SK-N-SH (cell line): ENCODE measurements at regions of chr22 and their contacts with region 1.

Region 1: DNA sequence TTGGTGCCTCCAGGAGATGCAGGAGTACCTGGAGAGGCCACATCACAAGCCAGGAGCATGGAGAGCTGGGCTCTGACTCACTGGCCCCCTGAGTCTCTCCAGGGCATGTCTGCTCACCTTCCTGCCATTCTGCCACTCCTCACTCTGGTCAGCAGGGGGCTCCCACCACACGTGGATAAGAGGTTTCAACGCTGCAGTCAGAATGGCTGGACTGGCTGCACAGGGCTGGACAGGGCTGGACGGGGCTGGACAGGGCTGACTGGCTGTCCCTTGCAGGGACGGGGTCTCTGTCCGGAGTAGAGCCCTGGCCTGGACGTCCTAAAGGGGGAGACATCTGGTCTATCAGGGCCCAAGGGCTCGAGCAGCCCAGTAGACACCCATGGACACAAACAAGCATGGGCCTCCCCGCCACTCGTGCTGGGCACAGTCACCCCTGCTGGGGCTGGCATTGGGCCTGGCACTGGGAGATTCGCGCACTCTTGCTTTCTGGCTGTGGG is 34.6 kb downstream of the CYTH4 start:
- DNase-seq: peak; percentile 92
- H3K4me3 ChIP-seq: no peak overlapping the region; a peak in 1 of 4 replicates
- H3K27ac ChIP-seq: no peak overlapping the region
- H3K4me1 ChIP-seq: no peaks in the 10 kb centered on the region
- H3K27me3 ChIP-seq: no peaks in the 10 kb centered on the region
- CTCF ChIP-seq: peak; percentile 90
- EP300 ChIP-seq: no peak
- RAD21 ChIP-seq: peak; percentile 99

Region 2: DNA sequence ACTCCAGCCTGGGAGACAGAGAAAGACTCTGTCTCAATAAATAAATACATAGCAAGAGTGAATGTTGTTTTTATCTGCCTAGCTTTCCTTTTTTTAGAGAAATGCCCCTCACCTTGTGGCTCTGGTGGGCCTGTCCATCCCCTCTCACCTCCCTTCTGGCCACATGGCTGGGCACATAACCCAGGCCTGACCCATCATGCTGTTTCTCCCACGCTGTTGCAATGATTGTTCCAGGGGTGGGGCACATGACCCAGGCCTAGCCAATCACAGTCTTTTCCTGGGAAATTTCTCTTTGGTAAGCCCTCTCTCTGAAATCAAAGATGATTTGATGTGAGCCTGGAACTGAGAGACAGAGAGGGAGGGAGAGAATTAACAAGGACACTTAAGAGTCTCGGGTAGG is 40.1 kb before region 1 on chr22:
- CTCF ChIA-PET with region 1: no interaction called
- POLR2A ChIA-PET with region 1: no interaction called
- DNase-seq: no peak
- H3K4me3 ChIP-seq: no peak overlapping the region
- H3K27ac ChIP-seq: no peak overlapping the region
- H3K4me1 ChIP-seq: 0 out of 4 replicates have a peak, but pooled peaks cover 0 to 6% of the 10 kb centered on the region in 2 experiments
- H3K27me3 ChIP-seq: no peaks in the 10 kb centered on the region
- CTCF ChIP-seq: no peak
- EP300 ChIP-seq: no peak
- RAD21 ChIP-seq: no peak

Region 3: GRCh38 chr22:37330200-37331033 is 13.5 kb after region 1 on chr22:
- CTCF ChIA-PET with region 1: interaction called, 46 read pairs
- POLR2A ChIA-PET with region 1: no interaction called
- DNase-seq: peak; percentile 86
- H3K4me3 ChIP-seq: no peak overlapping the region
- H3K27ac ChIP-seq: no peak overlapping the region
- H3K4me1 ChIP-seq: peaks cover 13 to 26% of the 10 kb centered on the region in 2 experiments; a peak in 3 of 4 replicates
- H3K27me3 ChIP-seq: no peaks in the 10 kb centered on the region
- CTCF ChIP-seq: peak; percentile 30; the same call in 1 of the 2 replicates
- EP300 ChIP-seq: no peak
- RAD21 ChIP-seq: no peak

Region 4: GRCh38 chr22:37428649-37429586 is 112.0 kb after region 1 on chr22:
- CTCF ChIA-PET with region 1: interaction called, 287 read pairs
- POLR2A ChIA-PET with region 1: no interaction called
- DNase-seq: peak; percentile 88
- H3K4me3 ChIP-seq: no peak overlapping the region; a peak in 1 of 4 replicates
- H3K27ac ChIP-seq: no peak overlapping the region
- H3K4me1 ChIP-seq: peaks cover 0 to 6% of the 10 kb centered on the region in 2 experiments; a peak in 1 of 4 replicates
- H3K27me3 ChIP-seq: no peaks in the 10 kb centered on the region; the same call in 1 of the 2 replicates
- CTCF ChIP-seq: peak; percentile 89
- EP300 ChIP-seq: no peak
- RAD21 ChIP-seq: peak; percentile 71

Region 5: GRCh38 chr22:37448511-37449127 is 131.7 kb after region 1 on chr22:
- CTCF ChIA-PET with region 1: interaction called, 203 read pairs
- POLR2A ChIA-PET with region 1: no interaction called
- DNase-seq: no peak
- H3K4me3 ChIP-seq: no peak overlapping the region
- H3K27ac ChIP-seq: no peak overlapping the region
- H3K4me1 ChIP-seq: no peaks in the 10 kb centered on the region; a peak in 1 of 4 replicates
- H3K27me3 ChIP-seq: no peaks in the 10 kb centered on the region
- CTCF ChIP-seq: no peak
- EP300 ChIP-seq: no peak
- RAD21 ChIP-seq: no peak

Region 6: GRCh38 chr22:37462983-37463382 is 146.1 kb after region 1 on chr22:
- CTCF ChIA-PET with region 1: interaction called, 203 read pairs
- POLR2A ChIA-PET with region 1: no interaction called
- DNase-seq: no peak
- H3K4me3 ChIP-seq: no peak overlapping the region
- H3K27ac ChIP-seq: peak overlapping the region in 1 of 2 experiments; percentile 78; a peak in 2 of 4 replicates
- H3K4me1 ChIP-seq: peaks cover 0 to 27% of the 10 kb centered on the region in 2 experiments; a peak in 1 of 4 replicates
- H3K27me3 ChIP-seq: 0 out of 2 replicates have a peak, but pooled peaks cover 7% of the 10 kb centered on the region
- CTCF ChIP-seq: no peak
- EP300 ChIP-seq: no peak
- RAD21 ChIP-seq: no peak